Caco-2 (cell line): ENCODE measurements at regions of chr10 and their contacts with region 1.

Region 1: DNA sequence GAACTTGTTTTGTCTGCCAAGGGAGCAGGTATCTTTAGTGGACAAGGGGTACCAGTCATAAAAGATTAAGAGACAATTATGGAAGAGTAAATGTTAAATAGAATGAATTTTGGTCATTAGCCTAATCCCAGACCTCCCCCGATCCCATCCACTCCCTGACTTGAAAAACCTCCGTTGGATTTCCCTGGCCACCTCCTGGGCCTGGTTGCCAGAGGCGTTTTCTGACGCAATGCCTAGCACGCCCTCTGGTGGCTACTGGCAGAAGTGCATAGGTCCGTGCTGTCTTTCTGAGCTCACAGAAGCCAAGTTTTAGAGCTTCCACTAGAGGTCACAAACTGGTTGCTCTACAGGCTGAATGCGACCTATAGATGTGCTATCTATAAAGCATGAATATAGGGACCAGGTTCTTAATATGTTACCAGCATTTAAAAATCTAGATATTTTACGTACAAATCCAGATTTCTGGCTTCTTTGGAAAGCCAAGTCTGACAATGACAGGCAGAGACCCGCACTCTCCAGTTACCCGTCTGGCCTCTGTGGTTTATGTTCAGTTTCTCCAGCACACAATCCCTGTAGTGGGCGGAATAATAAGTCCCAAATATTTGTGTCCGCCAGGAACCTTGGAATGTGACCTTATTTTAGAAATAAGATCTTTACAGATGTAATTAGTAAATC is 39.8 kb downstream of the SPOCK2 start:
- DNase-seq: peak; percentile 94 to 97
- H3K4me3 ChIP-seq: no peak overlapping the region
- H3K4me3 Mint-ChIP-seq: no peak overlapping the region
- H3K27ac Mint-ChIP-seq: peak overlapping the region; percentile 82
- H3K4me1 ChIP-seq: peaks cover 24% of the 10 kb centered on the region
- H3K4me1 Mint-ChIP-seq: peaks cover 20% of the 10 kb centered on the region
- H3K27me3 ChIP-seq: no peaks in the 10 kb centered on the region
- H3K27me3 Mint-ChIP-seq: no peaks in the 10 kb centered on the region
- CTCF ChIP-seq: peak; percentile 99 to 100

Region 2: DNA sequence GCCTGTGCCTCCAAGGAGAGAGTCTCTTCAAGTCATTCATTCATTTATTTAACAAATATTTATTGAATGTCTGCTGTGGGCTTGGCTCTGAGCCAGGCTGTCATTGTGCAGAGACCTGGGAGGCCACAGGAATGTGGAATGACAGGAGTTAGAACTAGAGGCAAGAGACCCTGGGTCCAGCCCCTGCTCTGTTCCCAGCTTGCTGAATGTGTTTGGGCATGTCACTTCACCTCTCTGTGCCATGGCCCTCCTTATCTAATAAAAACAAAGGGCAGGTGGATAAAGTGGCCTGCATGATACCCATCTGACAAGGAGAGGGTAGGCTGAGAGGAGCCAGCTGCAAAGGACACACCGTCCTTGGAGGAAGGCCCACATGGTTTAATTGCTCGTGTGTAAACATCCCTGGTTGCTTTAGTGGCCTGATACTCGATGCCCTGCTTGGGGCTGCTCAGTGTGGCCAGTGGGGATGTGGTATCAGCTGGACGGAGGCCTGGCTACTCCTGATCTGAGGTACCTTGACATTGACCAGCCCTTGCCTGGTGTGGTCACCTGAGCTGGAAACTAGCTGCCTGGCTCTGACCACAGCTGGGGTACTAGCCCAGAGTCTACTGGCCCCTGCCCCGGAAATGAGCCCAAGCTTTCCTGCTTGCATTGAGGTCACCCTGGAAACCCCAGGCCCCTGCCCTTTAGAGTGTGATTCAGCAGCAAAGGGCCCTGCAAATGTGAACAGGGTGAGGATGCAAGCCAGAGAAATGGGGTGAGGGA is 535.6 kb before region 1 on chr10:
- CTCF ChIA-PET with region 1: no interaction called
- POLR2A ChIA-PET with region 1: no interaction called
- intact Hi-C with region 1: no loop called
- DNase-seq: peak; percentile 71 to 80
- H3K4me3 ChIP-seq: no peak overlapping the region
- H3K4me3 Mint-ChIP-seq: no peak overlapping the region
- H3K27ac Mint-ChIP-seq: peak overlapping the region; percentile 47
- H3K4me1 ChIP-seq: peaks cover 13% of the 10 kb centered on the region
- H3K4me1 Mint-ChIP-seq: peaks cover 11% of the 10 kb centered on the region
- H3K27me3 ChIP-seq: no peaks in the 10 kb centered on the region
- H3K27me3 Mint-ChIP-seq: no peaks in the 10 kb centered on the region
- CTCF ChIP-seq: no peak

Region 3: DNA sequence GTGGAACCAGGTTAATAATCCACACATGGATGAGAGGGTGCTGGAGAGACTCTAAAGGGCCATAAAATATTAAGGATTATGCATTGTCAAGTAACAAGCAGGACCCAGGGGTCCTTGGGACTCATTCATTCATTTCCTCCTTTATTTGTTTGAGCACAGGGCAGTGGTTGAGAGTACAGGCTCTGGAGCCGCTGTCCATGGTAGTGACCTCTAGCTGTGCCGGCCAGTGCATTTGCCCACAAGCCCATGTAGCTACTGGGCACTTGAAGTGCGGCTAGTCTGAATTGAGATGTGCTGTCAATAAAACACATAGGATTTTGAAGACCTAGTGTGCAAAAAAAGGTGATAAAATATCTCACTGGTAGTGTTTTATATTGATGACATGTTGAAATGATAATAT is 466.6 kb before region 1 on chr10:
- CTCF ChIA-PET with region 1: no interaction called
- POLR2A ChIA-PET with region 1: no interaction called
- intact Hi-C with region 1: no loop called
- DNase-seq: peak in 1 of 2 experiments; percentile 62
- H3K4me3 ChIP-seq: no peak overlapping the region
- H3K4me3 Mint-ChIP-seq: no peak overlapping the region
- H3K27ac Mint-ChIP-seq: no peak overlapping the region
- H3K4me1 ChIP-seq: no peaks in the 10 kb centered on the region
- H3K4me1 Mint-ChIP-seq: no peaks in the 10 kb centered on the region
- H3K27me3 ChIP-seq: no peaks in the 10 kb centered on the region
- H3K27me3 Mint-ChIP-seq: peaks cover 6% of the 10 kb centered on the region
- CTCF ChIP-seq: no peak

Region 4: DNA sequence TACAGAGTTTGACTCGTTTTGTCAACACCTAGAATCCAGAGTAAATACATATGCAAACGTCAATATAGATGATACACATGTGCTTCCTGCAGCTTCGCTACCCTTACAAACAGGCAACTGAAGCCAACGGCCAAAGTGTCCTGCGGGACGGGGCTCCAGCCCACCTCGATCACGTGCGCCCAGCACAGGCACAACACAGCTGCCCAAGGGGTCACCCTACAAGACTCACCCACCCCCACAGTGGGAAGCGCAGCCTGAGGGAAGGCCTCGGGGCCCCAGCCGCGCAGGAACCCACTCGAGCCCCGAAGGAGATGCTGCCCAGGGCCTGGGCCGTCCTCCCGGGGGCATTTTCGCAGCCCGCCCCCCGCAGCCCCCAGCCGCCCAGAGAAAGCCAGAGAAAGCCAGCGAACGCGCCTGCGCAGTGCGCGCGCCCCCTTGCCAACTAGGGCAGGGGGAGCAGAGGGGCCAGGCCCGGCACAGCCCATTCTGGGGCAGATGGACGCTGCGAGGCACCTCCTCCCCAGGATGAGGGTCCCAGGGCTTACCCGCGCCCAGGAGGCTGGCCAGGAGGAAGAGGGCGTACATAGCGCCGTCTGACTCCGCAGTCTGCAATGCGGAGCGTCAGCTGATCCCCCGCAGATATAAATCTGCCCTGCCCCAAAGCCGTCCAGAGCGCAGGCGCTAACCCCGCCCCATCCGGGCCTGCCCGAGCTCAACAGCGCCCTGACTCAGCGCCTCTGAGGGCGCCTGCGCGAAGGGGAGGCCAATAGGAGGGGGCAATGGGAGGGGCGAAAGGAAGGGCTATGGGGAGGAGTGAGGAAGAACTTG is 197.7 kb before region 1 on chr10 and contains the start of gene PSAP:
- CTCF ChIA-PET with region 1: interaction called, 10 read pairs
- POLR2A ChIA-PET with region 1: no interaction called
- intact Hi-C with region 1: no loop called
- DNase-seq: peak; percentile 100
- H3K4me3 ChIP-seq: peak within 1 kb of the TSS; percentile 75
- H3K4me3 Mint-ChIP-seq: peak within 1 kb of the TSS; percentile 92
- H3K27ac Mint-ChIP-seq: peak within 1 kb of the TSS; percentile 90
- H3K4me1 ChIP-seq: peaks cover 20% of the 10 kb centered on the region
- H3K4me1 Mint-ChIP-seq: peaks cover 27% of the 10 kb centered on the region
- H3K27me3 ChIP-seq: no peaks in the 10 kb centered on the region
- H3K27me3 Mint-ChIP-seq: no peaks in the 10 kb centered on the region
- CTCF ChIP-seq: no peak
- total RNA-seq, gene PSAP: 1,227 and 1,316 TPM in 2 replicates

Region 5: DNA sequence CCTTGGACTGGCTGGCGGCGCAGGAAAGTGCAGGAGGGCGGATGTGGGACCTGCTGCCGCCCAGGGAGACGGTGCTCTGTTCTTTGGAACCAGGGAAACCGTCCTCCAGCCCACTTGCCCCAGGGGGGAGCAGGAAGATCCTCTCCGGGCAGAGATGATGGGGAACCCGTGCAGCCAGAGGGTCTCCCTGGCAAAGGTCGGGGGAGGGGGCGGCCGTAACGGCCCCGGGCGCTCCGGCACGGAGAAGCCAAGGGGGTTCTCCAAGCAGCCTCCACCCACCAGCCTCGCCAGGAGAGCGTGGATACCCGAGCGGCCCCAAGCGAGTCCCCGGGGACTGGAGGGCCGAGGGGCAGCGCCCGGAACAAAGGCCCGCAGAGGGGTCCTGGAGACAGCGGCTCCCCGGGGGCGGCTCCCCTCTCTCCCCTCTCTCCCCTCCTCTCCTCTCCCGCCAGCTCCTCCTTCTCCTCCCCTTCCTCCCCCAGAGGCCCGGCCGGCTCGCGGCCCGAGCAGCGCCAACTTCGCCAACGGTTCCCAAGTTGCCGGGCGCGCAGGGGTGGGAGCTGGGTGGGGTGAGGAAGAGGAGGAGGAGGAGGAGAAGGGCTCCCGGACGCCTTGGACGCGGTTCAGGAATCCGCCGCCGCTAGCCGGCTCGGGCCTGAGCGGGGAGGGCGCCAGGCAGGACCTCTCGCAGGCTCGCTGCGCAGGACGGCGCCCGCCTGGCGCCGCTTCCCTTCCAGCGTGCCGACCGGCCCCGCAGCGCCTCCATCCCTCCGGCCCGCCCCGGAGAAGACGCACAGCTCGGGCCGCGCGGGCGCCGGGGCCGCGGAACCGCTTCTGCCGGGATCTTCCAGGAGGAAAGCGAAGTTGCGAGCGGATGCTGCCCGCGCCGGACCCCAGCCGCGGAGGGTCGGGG is 84.6 kb before region 1 on chr10 and contains the start of gene CHST3:
- CTCF ChIA-PET with region 1: interaction called, 15 read pairs
- POLR2A ChIA-PET with region 1: interaction called, 3 read pairs
- intact Hi-C with region 1: loop called (anchors 1 kb)
- DNase-seq: peak; percentile 58 to 68
- H3K4me3 ChIP-seq: peak within 1 kb of the TSS; percentile 84
- H3K4me3 Mint-ChIP-seq: peak within 1 kb of the TSS; percentile 99
- H3K27ac Mint-ChIP-seq: peak within 1 kb of the TSS; percentile 96
- H3K4me1 ChIP-seq: peaks cover 67% of the 10 kb centered on the region
- H3K4me1 Mint-ChIP-seq: peaks cover 57% of the 10 kb centered on the region
- H3K27me3 ChIP-seq: no peaks in the 10 kb centered on the region
- H3K27me3 Mint-ChIP-seq: no peaks in the 10 kb centered on the region
- CTCF ChIP-seq: no peak
- total RNA-seq, gene CHST3: 40.9 and 46.0 TPM in 2 replicates

Region 6: GRCh38 chr10:72016608-72017312 is 31.8 kb before region 1 on chr10:
- CTCF ChIA-PET with region 1: interaction called, 23 read pairs
- POLR2A ChIA-PET with region 1: no interaction called
- intact Hi-C with region 1: loop called (anchors 2 kb)
- DNase-seq: no peak
- H3K4me3 ChIP-seq: no peak overlapping the region
- H3K4me3 Mint-ChIP-seq: no peak overlapping the region
- H3K27ac Mint-ChIP-seq: peak overlapping the region; percentile 34
- H3K4me1 ChIP-seq: peaks cover 30% of the 10 kb centered on the region
- H3K4me1 Mint-ChIP-seq: peaks cover 35% of the 10 kb centered on the region
- H3K27me3 ChIP-seq: no peaks in the 10 kb centered on the region
- H3K27me3 Mint-ChIP-seq: no peaks in the 10 kb centered on the region
- CTCF ChIP-seq: no peak

Region 7: DNA sequence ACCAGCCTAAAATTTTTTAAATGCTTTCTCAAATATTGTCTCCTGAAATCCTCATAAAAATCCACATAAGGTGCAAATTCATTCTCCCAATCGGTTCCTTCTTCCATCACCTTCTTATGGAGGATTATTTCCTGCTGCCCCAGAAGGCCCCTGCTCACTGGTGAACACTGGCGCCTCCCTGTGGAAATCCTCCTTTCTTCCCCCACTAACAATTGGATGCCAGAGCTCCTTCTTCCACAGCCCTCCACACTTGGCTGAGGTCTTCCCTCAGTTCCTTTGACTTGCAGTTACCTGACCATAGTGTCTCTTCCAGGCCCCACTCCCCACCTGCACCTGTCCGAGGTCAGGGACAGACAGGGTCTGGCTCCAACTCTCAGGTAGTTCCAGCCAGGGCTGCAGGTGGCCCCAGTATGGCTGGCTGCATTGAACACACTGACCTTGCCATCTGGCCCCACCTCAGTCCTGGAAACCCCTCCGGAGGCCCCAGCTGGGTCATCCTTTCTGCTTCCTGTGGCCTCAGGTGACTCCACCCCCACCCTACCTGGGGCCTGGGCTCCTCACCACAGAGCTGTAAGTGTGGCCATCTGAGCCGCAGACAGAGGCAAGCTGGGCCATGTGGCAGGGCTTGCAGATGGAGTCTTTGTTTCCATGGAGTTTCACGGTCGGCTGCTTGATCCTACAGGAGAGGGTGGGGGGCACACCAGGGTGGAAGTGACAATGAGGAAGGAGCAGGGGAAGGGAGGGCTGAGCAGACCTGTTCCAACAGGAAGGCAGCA is 21.4 kb after region 1 on chr10:
- CTCF ChIA-PET with region 1: interaction called, 22 read pairs
- POLR2A ChIA-PET with region 1: no interaction called
- intact Hi-C with region 1: no loop called
- DNase-seq: peak; percentile 37 to 38
- H3K4me3 ChIP-seq: no peak overlapping the region
- H3K4me3 Mint-ChIP-seq: no peak overlapping the region
- H3K27ac Mint-ChIP-seq: no peak overlapping the region
- H3K4me1 ChIP-seq: no peaks in the 10 kb centered on the region
- H3K4me1 Mint-ChIP-seq: peaks cover 6% of the 10 kb centered on the region
- H3K27me3 ChIP-seq: no peaks in the 10 kb centered on the region
- H3K27me3 Mint-ChIP-seq: no peaks in the 10 kb centered on the region
- CTCF ChIP-seq: peak in 1 of 2 experiments; percentile 30

Region 8: DNA sequence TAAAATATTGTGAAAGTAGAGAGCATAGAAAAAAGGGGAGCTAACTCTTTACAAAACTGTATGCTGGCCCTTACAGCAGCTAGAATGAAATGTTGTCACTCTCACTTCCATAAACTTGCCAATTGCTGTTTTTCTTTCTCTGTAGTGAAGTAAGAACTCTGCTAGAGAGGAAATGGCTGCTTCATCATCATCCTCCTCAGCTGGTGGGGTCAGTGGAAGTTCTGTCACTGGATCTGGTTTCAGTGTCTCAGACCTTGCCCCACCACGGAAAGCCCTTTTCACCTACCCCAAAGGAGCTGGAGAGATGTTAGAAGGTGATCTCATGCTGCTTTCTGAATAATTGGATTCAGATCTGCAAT is 175.1 kb after region 1 on chr10:
- CTCF ChIA-PET with region 1: interaction called, 4 read pairs
- POLR2A ChIA-PET with region 1: no interaction called
- intact Hi-C with region 1: loop called (anchors 1 kb)
- DNase-seq: no peak
- H3K4me3 ChIP-seq: no peak overlapping the region
- H3K4me3 Mint-ChIP-seq: no peak overlapping the region
- H3K27ac Mint-ChIP-seq: no peak overlapping the region
- H3K4me1 ChIP-seq: no peaks in the 10 kb centered on the region
- H3K4me1 Mint-ChIP-seq: no peaks in the 10 kb centered on the region
- H3K27me3 ChIP-seq: no peaks in the 10 kb centered on the region
- H3K27me3 Mint-ChIP-seq: no peaks in the 10 kb centered on the region
- CTCF ChIP-seq: no peak

Region 9: DNA sequence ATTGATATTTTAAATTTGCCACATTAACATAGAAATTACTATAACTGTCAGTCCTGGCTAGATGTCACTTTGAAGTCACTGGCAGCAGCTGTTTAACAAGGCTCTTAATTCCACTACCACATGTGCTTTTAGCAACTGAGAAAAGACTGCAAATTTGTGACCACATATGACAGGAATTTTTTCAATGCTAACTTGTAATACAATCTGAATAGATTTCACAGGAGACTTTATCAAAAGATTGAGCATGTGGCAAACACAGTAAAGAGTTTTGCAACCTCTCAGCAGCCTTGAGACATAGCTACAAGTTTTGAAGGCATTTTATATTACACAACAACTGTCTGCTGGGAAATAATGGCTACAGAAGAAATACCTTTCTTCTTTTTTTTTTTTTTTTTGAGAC is 504.3 kb after region 1 on chr10:
- CTCF ChIA-PET with region 1: no interaction called
- POLR2A ChIA-PET with region 1: no interaction called
- intact Hi-C with region 1: no loop called
- DNase-seq: peak in 1 of 2 experiments; percentile 46
- H3K4me3 ChIP-seq: no peak overlapping the region
- H3K4me3 Mint-ChIP-seq: no peak overlapping the region
- H3K27ac Mint-ChIP-seq: no peak overlapping the region
- H3K4me1 ChIP-seq: no peaks in the 10 kb centered on the region
- H3K4me1 Mint-ChIP-seq: no peaks in the 10 kb centered on the region
- H3K27me3 ChIP-seq: no peaks in the 10 kb centered on the region
- H3K27me3 Mint-ChIP-seq: no peaks in the 10 kb centered on the region
- CTCF ChIP-seq: no peak